Uterus (tissue), 4 donors: ENCODE measurements at regions of chr17 and their contacts with region 1.

Region 1: DNA sequence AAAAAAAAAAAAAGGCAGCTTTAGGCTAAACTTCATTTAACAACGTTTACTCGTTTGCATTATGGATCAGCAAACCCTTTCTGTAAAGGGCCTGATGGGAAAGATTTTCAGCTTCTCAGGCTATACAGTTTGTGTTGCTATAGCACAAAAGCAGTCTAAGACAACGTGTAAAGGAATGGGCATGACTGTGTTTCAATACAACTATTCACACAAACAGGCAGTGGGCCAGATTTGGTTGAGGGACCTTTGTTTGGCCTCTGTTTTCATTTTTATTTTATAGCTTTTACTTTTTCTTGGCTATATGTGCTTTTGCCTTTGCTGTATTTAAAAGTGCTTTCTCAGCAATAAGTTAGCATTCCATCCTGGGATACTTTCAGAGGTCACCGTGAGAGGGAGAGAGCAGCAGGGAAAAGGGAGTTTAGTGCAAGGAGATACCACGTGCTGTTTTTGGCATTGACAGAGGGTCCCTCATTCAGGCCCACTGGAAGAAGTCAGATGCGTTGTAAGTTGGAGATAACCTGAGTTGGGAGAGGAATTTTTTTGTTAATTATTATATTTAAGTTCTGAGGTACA is 335.6 kb downstream of the UTP18 start:
- DNase-seq: no peak
- H3K4me3 ChIP-seq: no peak overlapping the region
- H3K27ac ChIP-seq: no peak overlapping the region
- H3K4me1 ChIP-seq: no peaks in the 10 kb centered on the region
- H3K27me3 ChIP-seq: no peaks in the 10 kb centered on the region
- CTCF ChIP-seq: no peak
- POLR2A ChIP-seq: no peak

Region 2: GRCh38 chr17:51487947-51488346 is 108.0 kb before region 1 on chr17:
- intact Hi-C with region 1: no loop called
- DNase-seq: no peak
- H3K4me3 ChIP-seq: no peak overlapping the region
- H3K27ac ChIP-seq: no peak overlapping the region
- H3K4me1 ChIP-seq: no peaks in the 10 kb centered on the region
- H3K27me3 ChIP-seq: no peaks in the 10 kb centered on the region
- CTCF ChIP-seq: no peak
- POLR2A ChIP-seq: no peak

Region 3: DNA sequence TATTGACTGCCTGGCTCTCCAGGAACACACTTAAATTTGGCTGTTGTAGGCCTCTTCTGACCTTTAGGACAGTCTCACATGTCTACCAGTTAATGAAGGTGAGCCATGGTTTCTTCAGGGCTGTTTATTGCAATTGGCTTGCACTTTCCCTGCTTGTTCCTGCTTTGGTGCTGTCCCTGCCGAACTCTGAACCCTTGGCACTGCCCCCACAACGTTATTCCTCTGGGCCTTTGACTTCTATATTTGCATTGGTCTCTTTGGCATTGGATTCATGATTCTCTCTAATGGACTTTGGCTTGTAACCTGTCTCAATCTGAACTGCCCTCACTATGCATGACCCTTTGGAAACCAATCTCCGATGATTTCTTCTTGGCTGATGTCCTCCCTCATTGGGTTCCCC is 36.1 kb before region 1 on chr17:
- intact Hi-C with region 1: loop called (anchors 2 kb)
- DNase-seq: no peak
- H3K4me3 ChIP-seq: no peak overlapping the region
- H3K27ac ChIP-seq: no peak overlapping the region
- H3K4me1 ChIP-seq: no peaks in the 10 kb centered on the region
- H3K27me3 ChIP-seq: no peaks in the 10 kb centered on the region
- CTCF ChIP-seq: no peak
- POLR2A ChIP-seq: no peak

Region 4: GRCh38 chr17:51580869-51581268 is 15.0 kb before region 1 on chr17:
- intact Hi-C with region 1: no loop called
- DNase-seq: no peak
- H3K4me3 ChIP-seq: no peak overlapping the region
- H3K27ac ChIP-seq: no peak overlapping the region
- H3K4me1 ChIP-seq: no peaks in the 10 kb centered on the region
- H3K27me3 ChIP-seq: no peaks in the 10 kb centered on the region
- CTCF ChIP-seq: no peak
- POLR2A ChIP-seq: no peak

Region 5: GRCh38 chr17:51850201-51850600 is 254.3 kb after region 1 on chr17:
- intact Hi-C with region 1: no loop called
- DNase-seq: no peak
- H3K4me3 ChIP-seq: no peak overlapping the region
- H3K27ac ChIP-seq: no peak overlapping the region
- H3K4me1 ChIP-seq: no peaks in the 10 kb centered on the region
- H3K27me3 ChIP-seq: no peaks in the 10 kb centered on the region
- CTCF ChIP-seq: no peak
- POLR2A ChIP-seq: no peak